ENCODE measurements at regions of chr3 and their contacts with region 1.

Region 1: DNA sequence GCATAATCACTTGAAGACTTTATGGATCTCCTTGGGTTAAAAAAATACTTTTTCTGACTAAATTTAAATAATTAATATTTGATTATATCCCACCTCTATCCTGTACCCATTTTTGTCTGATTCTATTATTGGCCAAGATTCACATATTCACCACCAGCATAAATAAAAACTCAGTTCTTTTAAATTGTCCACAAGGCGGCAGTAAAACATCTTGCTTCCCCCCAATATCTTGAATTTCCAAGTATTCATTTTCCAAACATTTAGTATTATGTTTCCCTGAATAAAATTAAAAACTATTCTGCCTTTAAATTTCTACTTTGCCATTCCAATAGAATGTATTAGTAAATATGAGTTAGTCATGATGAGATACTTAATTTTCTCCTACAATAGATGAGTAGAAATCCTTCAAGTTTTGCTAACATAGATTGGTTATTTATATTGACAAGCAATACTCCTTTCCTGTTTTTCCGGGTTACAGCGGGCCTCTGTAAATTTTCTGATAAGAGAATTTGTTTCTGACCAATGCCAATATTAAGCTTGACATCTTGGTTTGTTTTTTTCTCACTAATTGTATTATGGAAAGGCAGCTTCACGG is 218.7 kb upstream of the MDFIC2 start:
- DNase-seq: peak; percentile 38
- H3K4me3 Mint-ChIP-seq: no peak overlapping the region
- H3K27ac Mint-ChIP-seq: no peak overlapping the region
- H3K4me1 Mint-ChIP-seq: no peaks in the 10 kb centered on the region
- H3K27me3 Mint-ChIP-seq: peaks cover 98% of the 10 kb centered on the region
- CTCF ChIP-seq: peak; percentile 40

Region 2: DNA sequence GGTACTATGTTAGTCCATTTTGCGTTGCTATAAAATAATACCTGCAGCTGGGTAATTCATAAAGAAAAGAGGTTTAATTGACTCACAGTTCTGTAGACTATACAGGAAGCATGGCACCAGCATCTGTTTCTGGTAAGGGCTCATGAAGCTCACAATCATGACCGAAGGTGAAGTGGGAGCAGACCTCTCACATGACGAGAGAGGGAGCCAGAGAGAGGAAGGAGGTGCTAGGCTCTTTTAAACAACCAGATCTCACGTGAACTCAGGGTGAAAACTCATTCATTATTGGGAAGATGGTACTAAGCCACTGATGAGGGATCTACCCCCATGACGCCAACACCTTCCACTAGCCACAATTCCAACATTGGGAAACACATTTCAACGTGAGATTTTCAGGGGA is 83.0 kb after region 1 on chr3:
- CTCF ChIA-PET with region 1: no interaction called
- POLR2A ChIA-PET with region 1: no interaction called
- intact Hi-C with region 1: no loop called
- DNase-seq: no peak
- H3K4me3 Mint-ChIP-seq: no peak overlapping the region
- H3K27ac Mint-ChIP-seq: no peak overlapping the region
- H3K4me1 Mint-ChIP-seq: no peaks in the 10 kb centered on the region
- H3K27me3 Mint-ChIP-seq: peaks cover 79% of the 10 kb centered on the region
- CTCF ChIP-seq: no peak

Region 3: GRCh38 chr3:71859123-71859519 is 1328.0 kb after region 1 on chr3:
- CTCF ChIA-PET with region 1: no interaction called
- POLR2A ChIA-PET with region 1: no interaction called
- intact Hi-C with region 1: loop called (anchors 10 kb)
- DNase-seq: peak; percentile 80
- H3K4me3 Mint-ChIP-seq: no peak overlapping the region
- H3K27ac Mint-ChIP-seq: no peak overlapping the region
- H3K4me1 Mint-ChIP-seq: no peaks in the 10 kb centered on the region
- H3K27me3 Mint-ChIP-seq: peaks cover 44% of the 10 kb centered on the region
- CTCF ChIP-seq: peak; percentile 35